Activated CD4-positive, alpha-beta T cell treated with anti-CD3 and anti-CD28 coated beads for 36 hours (primary cell): ENCODE measurements at regions of chr17 and their contacts with region 1.

Region 1: GRCh38 chr17:8073627-8074484 is 13.7 kb downstream of the ALOX12B start:
- DNase-seq: peak; percentile 94
- ATAC-seq: peak; percentile 93
- H3K4me3 Mint-ChIP-seq: peak overlapping the region; percentile 66
- H3K27ac Mint-ChIP-seq: peak overlapping the region; percentile 66
- H3K4me1 Mint-ChIP-seq: peaks cover 20% of the 10 kb centered on the region
- H3K27me3 Mint-ChIP-seq: peaks cover 31% of the 10 kb centered on the region

Region 2: DNA sequence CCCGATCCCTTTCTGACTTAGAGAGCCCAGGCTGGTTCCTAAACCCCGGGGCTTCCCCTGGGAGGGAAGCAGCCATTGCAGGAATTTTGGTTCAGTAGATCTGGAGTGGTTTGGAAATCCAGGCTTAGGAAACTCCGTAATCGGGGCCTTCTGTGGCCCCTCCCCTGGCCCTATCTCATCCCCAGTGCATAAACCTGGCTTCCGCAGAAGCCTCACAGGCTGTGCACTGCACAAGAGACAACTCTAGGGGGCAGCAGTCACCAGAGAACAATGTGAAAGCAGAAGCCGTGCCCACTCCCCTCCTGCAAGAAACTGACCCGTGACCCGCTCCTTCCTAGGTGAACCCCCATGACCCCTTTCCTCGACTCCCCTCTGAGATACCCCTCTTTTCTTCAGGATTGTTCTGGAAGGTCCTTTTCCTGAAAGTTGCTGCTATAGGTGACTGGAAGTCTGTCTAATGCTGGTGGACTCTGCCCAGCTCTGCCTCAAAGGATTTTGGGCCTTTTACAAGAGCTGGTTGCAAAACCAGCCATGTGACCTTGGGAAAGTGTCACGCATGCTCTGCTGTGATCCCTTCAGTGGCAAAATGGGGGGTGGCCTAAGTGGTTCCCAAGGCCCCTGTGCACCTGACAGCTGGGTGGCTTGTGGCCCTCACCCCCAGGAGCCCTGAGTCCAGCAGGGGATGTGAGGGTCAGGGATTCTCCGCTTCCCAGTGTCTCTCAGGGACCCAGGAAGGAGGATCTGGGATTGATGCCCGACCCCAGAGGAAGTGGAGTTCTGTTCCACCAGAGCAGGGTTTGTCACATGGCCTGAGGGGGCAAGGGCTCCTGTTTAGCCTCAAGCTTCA is 57.0 kb before region 1 on chr17:
- CTCF ChIA-PET with region 1: interaction called, 10 read pairs
- POLR2A ChIA-PET with region 1: no interaction called
- intact Hi-C with region 1: no loop called
- DNase-seq: peak; percentile 80
- ATAC-seq: peak; percentile 91
- H3K4me3 Mint-ChIP-seq: peak overlapping the region; percentile 60
- H3K27ac Mint-ChIP-seq: no peak overlapping the region
- H3K4me1 Mint-ChIP-seq: peaks cover 5% of the 10 kb centered on the region
- H3K27me3 Mint-ChIP-seq: peaks cover 6% of the 10 kb centered on the region

Region 3: GRCh38 chr17:8091033-8091687 is 17.3 kb after region 1 on chr17:
- CTCF ChIA-PET with region 1: interaction called, 22 read pairs
- POLR2A ChIA-PET with region 1: interaction called, 3 read pairs
- intact Hi-C with region 1: no loop called
- DNase-seq: no peak
- ATAC-seq: no peak
- H3K4me3 Mint-ChIP-seq: no peak overlapping the region
- H3K27ac Mint-ChIP-seq: no peak overlapping the region
- H3K4me1 Mint-ChIP-seq: peaks cover 14% of the 10 kb centered on the region
- H3K27me3 Mint-ChIP-seq: peaks cover 5% of the 10 kb centered on the region

Region 4: DNA sequence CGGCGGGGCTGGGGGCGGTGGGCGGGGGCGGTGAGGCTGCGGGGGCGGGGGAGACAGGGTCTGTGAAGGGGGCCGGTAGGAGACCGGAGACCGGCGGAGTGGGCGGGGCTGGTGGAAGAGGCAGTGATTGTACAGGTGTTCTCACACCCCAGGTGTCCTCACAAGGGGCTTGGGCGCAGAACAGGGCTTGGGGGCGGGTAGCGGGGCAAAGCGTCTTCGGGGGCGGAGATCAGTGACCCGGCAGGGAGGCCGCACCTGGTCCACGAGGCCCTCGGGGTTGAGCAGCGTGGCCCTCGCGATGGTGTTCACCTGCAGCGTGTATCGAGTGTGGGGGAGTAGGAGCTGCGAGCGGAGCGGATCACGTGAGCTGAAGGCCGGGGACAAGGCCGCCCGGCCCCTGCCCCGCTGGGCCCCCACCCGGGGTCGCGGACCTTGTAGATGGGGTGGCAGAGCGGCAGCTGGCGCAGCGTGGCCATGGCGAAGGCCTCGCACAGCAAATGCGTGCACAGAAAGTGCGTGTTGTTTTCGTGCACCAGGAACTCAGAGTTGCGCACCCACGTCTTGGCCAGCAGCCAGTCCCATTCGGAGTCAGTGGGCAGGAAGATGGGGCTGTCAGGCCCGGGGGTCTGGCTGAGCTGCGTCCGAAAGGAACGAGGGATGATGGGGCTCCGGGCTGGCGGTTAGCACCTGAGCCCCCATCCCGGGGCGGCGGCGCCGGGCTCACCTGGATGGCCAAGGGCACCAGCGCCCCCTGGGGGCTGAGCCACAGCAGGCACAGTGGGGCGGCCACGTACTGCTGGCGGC is 36.0 kb after region 1 on chr17:
- CTCF ChIA-PET with region 1: interaction called, 41 read pairs
- POLR2A ChIA-PET with region 1: no interaction called
- intact Hi-C with region 1: no loop called
- DNase-seq: peak; percentile 90
- ATAC-seq: peak; percentile 97
- H3K4me3 Mint-ChIP-seq: peak overlapping the region; percentile 34
- H3K27ac Mint-ChIP-seq: no peak overlapping the region
- H3K4me1 Mint-ChIP-seq: peaks cover 5% of the 10 kb centered on the region
- H3K27me3 Mint-ChIP-seq: peaks cover 19% of the 10 kb centered on the region